WTC11 (cell line): ENCODE measurements at regions of chr10 and their contacts with region 1.

Region 1: GRCh38 chr10:86971232-86971991 is 3.1 kb downstream of the ADIRF start:
- DNase-seq: peak; percentile 66
- ATAC-seq: peak; percentile 20
- H3K4me3 Mint-ChIP-seq: peak overlapping the region; percentile 82
- H3K27ac Mint-ChIP-seq: 0 out of 2 replicates have a peak overlapping the region, but pooled peaks have one; percentile 65
- H3K4me1 Mint-ChIP-seq: peaks cover 48% of the 10 kb centered on the region
- H3K27me3 Mint-ChIP-seq: peaks cover 58% of the 10 kb centered on the region
- CTCF ChIP-seq: no peak

Region 2: DNA sequence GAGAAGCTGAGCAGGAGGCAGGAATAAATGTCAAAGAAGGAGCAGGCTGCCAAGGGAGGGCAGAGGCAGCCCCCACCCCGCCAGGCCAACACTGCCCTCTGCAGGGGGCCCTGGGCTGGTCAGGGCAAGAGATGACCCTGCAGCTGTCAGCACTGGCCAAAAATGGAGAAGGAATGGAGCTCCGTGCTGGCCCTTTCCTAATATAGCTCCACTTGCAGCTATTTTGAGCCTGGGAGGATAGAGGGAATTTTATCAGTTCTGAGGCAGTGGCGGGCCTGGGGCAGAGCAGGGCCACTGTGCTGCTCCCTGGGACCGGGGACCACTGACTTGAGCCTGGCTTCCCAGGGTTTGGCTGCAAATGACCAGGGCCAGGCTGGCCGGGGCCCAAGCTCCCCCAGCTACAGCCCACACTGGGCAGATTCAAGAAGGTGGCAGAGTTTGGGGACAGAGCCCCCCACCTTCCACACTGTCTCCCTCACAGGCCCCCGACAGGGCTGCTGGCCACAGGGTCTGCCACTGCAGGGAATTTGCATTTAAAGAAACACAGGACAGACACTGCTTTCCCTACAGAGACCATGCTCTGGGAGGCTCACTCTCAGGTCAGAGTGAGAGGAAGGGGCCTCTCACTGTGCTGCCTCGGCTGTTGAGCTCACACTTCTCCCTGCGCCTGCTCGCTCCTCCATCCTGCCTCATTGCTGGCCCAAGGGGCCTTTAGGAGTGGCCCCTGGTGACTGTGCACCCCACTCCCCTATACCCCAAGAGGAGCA is 286.9 kb before region 1 on chr10:
- CTCF ChIA-PET with region 1: interaction called, 11 read pairs
- POLR2A ChIA-PET with region 1: no interaction called
- DNase-seq: peak; percentile 59
- ATAC-seq: peak; percentile 32
- H3K4me3 Mint-ChIP-seq: no peak overlapping the region
- H3K27ac Mint-ChIP-seq: no peak overlapping the region
- H3K4me1 Mint-ChIP-seq: peaks cover 33% of the 10 kb centered on the region
- H3K27me3 Mint-ChIP-seq: no peaks in the 10 kb centered on the region
- CTCF ChIP-seq: no peak; the same call in 1 of the 2 replicates

Region 3: DNA sequence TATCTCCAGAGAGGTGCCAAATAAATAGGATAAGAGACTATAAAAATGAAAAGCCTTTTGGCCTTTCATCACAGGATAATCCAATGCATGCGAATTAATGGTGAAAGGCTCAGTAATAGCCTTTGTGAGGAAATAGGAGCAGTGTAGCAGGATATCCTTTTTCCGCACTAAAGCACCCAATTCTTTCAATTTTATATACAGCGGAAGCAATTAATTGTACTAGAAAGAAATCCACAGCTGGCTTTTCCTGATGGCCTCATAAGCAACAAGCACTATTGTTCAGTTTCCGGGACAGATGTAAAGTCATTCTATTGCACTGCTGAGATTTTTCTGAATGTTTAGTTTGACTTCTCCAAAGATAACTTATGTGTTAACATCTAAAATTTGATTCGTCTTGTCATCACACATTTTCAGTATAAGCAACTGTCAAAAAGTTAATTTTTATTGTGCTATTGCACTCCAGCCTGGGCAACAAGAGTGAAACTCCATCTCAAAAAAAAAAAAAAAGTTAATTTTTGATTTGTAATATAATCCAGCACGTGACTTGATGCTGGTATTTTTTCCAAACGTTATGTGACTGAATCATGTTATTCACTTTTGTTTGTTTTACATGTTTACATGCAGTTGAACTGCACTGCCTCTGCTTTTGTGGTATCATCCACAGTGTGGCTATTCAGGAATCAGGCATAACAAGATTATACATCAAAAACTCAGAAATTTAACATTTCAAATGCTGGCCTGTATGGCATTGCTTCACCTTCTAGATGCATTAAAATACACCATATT is 223.4 kb before region 1 on chr10:
- CTCF ChIA-PET with region 1: no interaction called
- POLR2A ChIA-PET with region 1: no interaction called
- DNase-seq: no peak
- ATAC-seq: no peak
- H3K4me3 Mint-ChIP-seq: no peak overlapping the region
- H3K27ac Mint-ChIP-seq: no peak overlapping the region
- H3K4me1 Mint-ChIP-seq: peaks cover 27% of the 10 kb centered on the region
- H3K27me3 Mint-ChIP-seq: no peaks in the 10 kb centered on the region
- CTCF ChIP-seq: no peak

Region 4: GRCh38 chr10:86851329-86852207 is 119.8 kb before region 1 on chr10:
- CTCF ChIA-PET with region 1: no interaction called
- POLR2A ChIA-PET with region 1: no interaction called
- DNase-seq: no peak
- ATAC-seq: peak; percentile 25; the same call in 1 of the 2 replicates
- H3K4me3 Mint-ChIP-seq: no peak overlapping the region
- H3K27ac Mint-ChIP-seq: peak overlapping the region; percentile 91
- H3K4me1 Mint-ChIP-seq: peaks cover 63% of the 10 kb centered on the region
- H3K27me3 Mint-ChIP-seq: no peaks in the 10 kb centered on the region
- CTCF ChIP-seq: no peak

Region 5: GRCh38 chr10:86945361-86946212 is 25.8 kb before region 1 on chr10:
- CTCF ChIA-PET with region 1: interaction called, 462 read pairs
- POLR2A ChIA-PET with region 1: interaction called, 3 read pairs
- DNase-seq: peak; percentile 82
- ATAC-seq: peak; percentile 90
- H3K4me3 Mint-ChIP-seq: no peak overlapping the region
- H3K27ac Mint-ChIP-seq: no peak overlapping the region
- H3K4me1 Mint-ChIP-seq: peaks cover 25% of the 10 kb centered on the region
- H3K27me3 Mint-ChIP-seq: no peaks in the 10 kb centered on the region; the same call in 1 of the 2 replicates
- CTCF ChIP-seq: peak; percentile 24; the same call in 1 of the 2 replicates

Region 6: DNA sequence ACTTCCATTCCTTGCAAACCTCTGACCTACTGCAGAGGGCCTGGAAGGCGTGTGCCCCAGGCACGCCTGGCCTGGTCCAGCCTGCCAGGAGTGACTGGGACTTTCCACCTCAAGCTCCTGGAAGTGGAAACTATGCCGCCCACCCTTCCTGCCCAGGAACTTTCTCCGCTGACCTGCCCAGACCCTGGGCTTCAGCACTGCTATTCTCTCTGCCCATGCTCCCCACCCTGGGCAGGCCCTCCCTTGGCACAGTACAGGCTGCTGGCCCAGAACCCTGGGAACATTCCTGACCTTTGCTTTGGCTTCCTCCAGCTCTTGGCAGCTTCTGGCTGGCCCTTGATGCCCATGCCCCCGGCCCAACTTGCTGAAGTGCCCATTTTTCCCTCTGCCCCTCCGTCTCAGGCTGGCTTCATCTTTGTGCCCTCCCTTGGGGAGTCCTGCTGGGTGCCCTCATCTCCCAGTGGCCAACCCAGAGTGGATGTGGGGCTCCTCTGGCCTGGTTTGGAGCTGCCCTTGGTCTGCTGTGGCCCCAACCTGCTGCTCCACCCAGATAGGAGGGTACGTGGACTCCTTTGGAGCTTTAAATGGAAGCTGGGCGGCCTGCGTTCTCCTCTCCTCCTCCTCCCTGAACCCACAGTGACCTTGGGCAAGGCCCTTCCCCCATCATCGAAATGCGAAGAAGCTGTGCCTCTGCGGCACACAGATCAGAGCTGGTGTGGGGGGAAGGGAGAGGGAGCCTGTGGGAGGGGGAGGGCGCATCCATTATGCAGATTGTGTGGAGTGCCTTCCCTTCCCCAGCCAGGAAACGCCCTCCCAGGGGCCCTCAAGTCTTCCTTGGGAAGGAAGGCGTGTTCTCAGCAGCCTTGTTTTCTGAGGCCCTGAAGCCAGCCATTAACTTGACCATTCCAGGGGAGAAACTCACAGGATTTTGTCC is 17.4 kb before region 1 on chr10:
- CTCF ChIA-PET with region 1: interaction called, 462 read pairs
- POLR2A ChIA-PET with region 1: interaction called, 5 read pairs
- DNase-seq: peak; percentile 90
- ATAC-seq: peak; percentile 89
- H3K4me3 Mint-ChIP-seq: peak overlapping the region; percentile 30; the same call in 1 of the 2 replicates
- H3K27ac Mint-ChIP-seq: peak overlapping the region; percentile 93
- H3K4me1 Mint-ChIP-seq: peaks cover 57% of the 10 kb centered on the region
- H3K27me3 Mint-ChIP-seq: no peaks in the 10 kb centered on the region; the same call in none of the 2 replicates
- CTCF ChIP-seq: no peak

Region 7: DNA sequence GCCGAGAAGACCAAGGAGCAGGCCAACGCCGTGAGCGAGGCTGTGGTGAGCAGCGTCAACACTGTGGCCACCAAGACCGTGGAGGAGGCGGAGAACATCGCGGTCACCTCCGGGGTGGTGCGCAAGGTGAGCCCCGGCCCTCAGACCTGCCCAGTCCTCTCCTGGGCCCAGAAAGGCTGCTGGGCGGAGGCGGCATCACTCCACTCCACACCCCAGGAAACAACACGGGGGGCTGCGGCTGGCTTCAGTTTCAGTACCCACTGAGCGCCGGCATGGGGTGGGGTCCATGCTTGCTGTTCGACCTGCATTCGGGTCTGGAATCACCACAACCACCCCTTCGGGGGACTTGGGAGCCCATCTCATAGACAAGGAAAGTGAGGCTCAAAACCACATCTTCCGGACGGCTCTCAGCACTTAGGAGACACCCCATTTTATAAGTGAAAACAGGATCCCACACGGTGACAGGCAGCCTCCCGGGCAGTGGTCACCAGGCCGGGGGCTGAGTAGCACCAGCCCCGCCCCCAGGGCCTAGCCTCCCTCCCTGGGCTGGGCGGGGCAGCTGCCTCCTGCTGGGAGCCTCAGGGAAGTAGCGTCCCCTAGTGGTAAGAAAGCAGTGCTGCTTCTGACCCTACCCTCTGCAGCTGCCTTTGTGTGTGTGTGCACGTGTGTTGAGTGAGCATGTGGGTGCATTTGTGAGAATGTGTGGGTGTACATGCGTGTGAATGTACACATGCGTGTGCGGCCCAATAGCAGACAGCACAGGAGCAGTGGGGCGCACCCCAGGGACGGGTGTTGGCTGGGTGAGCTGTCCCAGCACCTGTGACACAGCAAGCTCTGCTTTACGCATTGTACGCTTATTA is 11.2 kb before region 1 on chr10:
- CTCF ChIA-PET with region 1: interaction called, 85 read pairs
- POLR2A ChIA-PET with region 1: interaction called, 5 read pairs
- DNase-seq: peak; percentile 69
- ATAC-seq: peak; percentile 70
- H3K4me3 Mint-ChIP-seq: no peak overlapping the region
- H3K27ac Mint-ChIP-seq: 0 out of 2 replicates have a peak overlapping the region, but pooled peaks have one; percentile 1
- H3K4me1 Mint-ChIP-seq: peaks cover 41% of the 10 kb centered on the region
- H3K27me3 Mint-ChIP-seq: no peaks in the 10 kb centered on the region
- CTCF ChIP-seq: peak; percentile 99

Region 8: GRCh38 chr10:87038786-87039185 is 67.4 kb after region 1 on chr10:
- CTCF ChIA-PET with region 1: no interaction called
- POLR2A ChIA-PET with region 1: no interaction called
- DNase-seq: no peak
- ATAC-seq: no peak
- H3K4me3 Mint-ChIP-seq: no peak overlapping the region
- H3K27ac Mint-ChIP-seq: no peak overlapping the region
- H3K4me1 Mint-ChIP-seq: no peaks in the 10 kb centered on the region
- H3K27me3 Mint-ChIP-seq: no peaks in the 10 kb centered on the region; the same call in 1 of the 2 replicates
- CTCF ChIP-seq: no peak